ENCODE measurements at regions of chr12 and their contacts with region 1.

Region 1: DNA sequence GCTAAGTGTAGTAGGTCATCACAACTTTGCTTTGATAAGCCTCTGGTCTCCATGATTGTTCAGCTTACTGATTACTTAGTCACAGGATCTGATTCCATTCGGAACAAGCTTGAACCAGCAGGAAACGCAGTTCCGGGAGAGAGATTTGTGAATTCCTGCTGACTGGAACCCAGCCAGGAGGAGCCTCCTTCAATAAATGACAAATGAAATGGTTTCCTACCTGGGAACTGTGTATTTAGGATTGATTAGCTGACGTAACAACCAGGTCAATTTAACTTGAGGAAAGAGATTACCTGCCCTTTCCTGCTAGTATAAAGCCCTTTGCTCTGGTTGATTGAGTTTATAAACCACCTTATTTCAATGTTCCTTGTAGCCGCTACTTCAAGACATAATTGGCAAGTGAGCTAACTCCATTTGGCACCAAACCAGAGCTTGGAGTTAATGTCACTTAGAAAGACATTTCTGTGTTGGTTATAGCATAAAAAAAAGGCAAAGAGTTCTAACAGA is 35.1 kb upstream of the KCNH3 start:
- DNase-seq: peak; percentile 34 to 48 (median 44)
- ATAC-seq: peak; percentile 58
- H3K4me3 ChIP-seq: no peak overlapping the region
- H3K27ac ChIP-seq: peak overlapping the region in 2 of 4 donors; percentile 34 to 36
- H3K4me1 ChIP-seq: no peaks in the 10 kb centered on the region
- H3K27me3 ChIP-seq: no peaks in the 10 kb centered on the region
- CTCF ChIP-seq: no peak
- POLR2A ChIP-seq: no peak

Region 2: DNA sequence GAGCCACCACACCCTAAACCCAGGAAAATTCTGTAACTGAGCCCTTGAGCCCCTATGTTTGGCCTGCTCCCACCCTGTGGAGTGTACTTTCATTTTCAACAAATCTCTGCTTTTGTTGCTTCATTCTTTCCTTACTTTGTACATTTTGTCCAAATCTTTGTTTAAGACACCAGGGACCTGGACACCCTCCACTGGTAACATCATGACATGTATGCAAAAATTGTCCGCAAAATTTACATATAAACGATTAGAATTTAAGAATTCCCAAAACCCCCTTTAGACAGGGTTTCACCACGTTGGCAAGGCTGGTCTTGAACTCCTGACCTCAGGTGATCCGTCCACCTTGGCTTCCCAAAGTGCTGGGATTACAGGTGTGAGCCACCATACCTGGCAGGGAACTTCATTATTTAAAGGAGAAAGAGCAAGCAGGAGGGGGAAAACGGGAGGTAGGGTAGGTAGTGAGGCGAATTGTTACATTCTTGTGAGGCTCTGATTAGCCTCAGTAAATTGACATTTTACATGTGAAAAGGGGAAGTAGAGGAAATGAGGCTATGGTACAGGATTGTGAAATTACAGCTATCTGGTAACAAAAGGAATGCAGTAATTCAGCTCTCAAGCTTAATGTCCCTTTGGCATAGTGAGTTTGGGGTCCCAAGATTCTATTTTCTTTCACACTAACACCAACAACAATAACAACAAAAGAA is 342.5 kb before region 1 on chr12:
- intact Hi-C with region 1: loop called (anchors 10 kb)
- DNase-seq: no peak
- ATAC-seq: no peak
- H3K4me3 ChIP-seq: no peak overlapping the region
- H3K27ac ChIP-seq: no peak overlapping the region
- H3K4me1 ChIP-seq: no peaks in the 10 kb centered on the region
- H3K27me3 ChIP-seq: no peaks in the 10 kb centered on the region
- CTCF ChIP-seq: no peak
- POLR2A ChIP-seq: no peak

Region 3: DNA sequence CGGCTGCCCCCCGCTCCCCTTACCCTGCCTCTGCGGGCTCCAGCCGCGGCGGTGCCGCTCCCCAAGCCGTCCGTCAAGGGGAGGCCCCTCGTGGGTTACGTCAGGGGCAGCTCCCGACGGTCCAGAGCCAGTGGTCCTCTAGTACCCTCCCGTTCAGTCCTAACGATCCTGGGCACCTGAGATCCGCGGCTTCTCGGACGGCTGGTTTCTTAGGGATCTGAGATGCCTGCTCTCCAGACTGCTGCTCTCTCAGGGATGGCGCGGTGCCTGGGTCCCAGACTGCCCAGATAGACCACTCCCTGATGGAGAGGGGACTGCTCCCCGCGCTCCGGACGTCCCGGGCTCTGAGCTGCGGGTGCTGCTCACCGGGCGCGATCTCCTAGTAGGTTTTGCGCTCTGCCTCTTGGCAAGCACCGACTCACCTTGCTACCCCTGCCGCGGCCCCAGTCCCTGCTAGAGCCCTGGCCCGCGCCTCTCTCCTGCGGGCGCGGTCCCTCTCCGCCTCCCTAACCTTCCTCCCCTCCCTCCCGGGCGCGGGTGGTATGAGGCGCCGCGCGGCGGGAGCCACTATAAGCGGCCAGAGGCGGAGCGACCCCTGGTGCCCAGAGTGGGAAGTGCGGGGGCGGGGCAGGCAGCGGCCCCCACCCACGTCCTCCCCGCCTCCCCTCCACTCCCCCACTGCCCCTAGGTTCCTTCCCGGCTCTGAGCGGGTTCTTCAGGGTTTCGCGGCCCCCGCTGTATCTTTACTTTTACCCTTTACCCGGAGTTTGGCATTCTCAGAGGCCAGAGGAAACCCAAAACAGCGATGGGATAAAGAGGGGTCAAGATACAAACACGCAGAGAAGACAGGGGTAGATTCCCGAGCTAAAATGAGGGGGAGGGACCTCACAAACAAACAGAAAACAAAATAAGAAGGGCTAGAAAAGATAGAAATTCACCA is 166.8 kb before region 1 on chr12 and contains the start of gene C1QL4:
- intact Hi-C with region 1: loop called (anchors 10 kb)
- DNase-seq: peak; percentile 79 to 89 (median 83)
- ATAC-seq: peak; percentile 91
- H3K4me3 ChIP-seq: no peak within 1 kb of the TSS
- H3K27ac ChIP-seq: no peak within 1 kb of the TSS
- H3K4me1 ChIP-seq: peaks cover 24% of the 10 kb centered on the region
- H3K27me3 ChIP-seq: peaks cover 5 to 14% of the 10 kb centered on the region in 2 donors
- CTCF ChIP-seq: peak; percentile 74 to 99 (median 84)
- POLR2A ChIP-seq: no peak
- total RNA-seq, gene C1QL4: not detected

Region 4: DNA sequence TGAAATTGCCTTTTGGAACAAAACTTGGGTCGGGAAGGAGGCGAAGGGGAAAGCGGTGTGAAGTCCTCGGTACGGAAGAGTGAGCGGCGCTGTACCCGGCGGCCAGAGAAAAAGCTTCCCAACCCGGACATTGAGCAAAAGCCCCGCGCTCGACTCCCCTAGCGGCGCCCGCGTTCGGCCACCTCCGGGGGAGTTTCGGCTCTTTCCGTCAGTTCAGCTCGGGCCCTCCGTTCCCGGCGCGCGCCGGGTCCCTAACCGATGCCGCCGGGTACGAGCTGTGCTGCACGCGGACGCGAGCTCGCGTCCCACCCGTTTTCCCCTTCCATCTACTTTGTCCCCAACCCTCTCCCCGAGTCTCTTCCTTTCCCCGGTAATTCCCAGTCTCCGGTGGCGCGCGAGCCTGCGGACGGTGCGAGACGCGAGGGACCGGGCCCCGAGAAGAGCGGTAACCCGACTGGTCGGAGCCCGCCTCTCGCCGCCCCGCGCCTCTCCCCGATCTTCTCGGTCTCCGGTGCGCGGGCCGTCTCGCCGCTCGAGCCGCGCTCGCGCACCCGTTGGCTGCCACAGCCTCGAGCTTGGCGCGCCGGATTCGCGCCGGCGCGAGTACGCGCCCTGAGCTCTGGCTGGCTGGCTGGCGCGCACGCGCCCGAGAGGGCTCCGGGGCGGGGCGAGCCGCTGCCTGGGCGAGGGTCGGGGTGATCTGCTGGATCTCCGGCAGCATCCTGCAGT is 136.9 kb before region 1 on chr12:
- intact Hi-C with region 1: loop called (anchors 10 kb)
- DNase-seq: peak; percentile 84 to 91 (median 86)
- ATAC-seq: peak; percentile 89
- H3K4me3 ChIP-seq: peak overlapping the region; percentile 15 to 83
- H3K27ac ChIP-seq: peak overlapping the region; percentile 80 to 96 (median 88)
- H3K4me1 ChIP-seq: peaks cover 28% of the 10 kb centered on the region
- H3K27me3 ChIP-seq: no peaks in the 10 kb centered on the region
- CTCF ChIP-seq: peak in 6 of 7 experiments; percentile 23 to 51 (median 42)
- POLR2A ChIP-seq: peak; percentile 18 to 79 (median 66)